CD8-positive, alpha-beta T cell (primary cell): ENCODE measurements at regions of chr1 and their contacts with region 1.

Region 1: DNA sequence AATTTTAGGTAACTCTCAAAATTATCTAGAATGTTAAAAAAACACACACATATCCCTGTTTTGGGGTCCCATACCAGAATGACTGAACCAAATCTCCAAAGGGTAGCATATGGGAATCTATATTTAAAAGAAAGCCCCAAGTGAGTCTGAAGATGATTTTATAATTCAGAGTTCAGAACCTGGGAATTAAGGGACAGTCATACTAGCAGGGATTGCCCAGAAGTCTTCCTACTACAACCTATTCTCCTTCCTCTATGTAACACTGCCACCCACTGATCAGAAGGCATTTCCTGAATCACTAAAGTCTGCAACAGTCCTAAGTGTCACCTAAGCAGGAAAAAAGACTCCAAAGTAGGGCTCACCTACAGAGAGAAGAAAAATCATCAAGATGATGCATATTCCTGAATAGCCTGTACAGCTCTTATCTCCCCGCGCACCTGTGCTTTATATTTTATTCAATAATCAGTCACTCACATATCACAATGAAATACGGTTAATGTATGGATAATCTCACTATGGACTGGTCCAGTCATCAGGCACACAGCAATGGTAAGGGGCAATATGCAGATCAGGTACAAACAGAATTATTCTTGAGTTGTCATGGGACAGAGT is 4.9 kb downstream of the RGS1 start:
- DNase-seq: peak in 3 of 9 experiments; percentile 6 to 73 (median 62)
- ATAC-seq: peak; percentile 29
- H3K4me3 ChIP-seq: no peak overlapping the region
- H3K4me3 Mint-ChIP-seq: no peak overlapping the region
- H3K27ac ChIP-seq: no peak overlapping the region
- H3K27ac Mint-ChIP-seq: peak overlapping the region; percentile 11
- H3K4me1 ChIP-seq: peaks cover 8% of the 10 kb centered on the region
- H3K4me1 Mint-ChIP-seq: peaks cover 18% of the 10 kb centered on the region
- H3K27me3 ChIP-seq: no peaks in the 10 kb centered on the region
- H3K27me3 Mint-ChIP-seq: no peaks in the 10 kb centered on the region
- CTCF ChIP-seq: no peak

Region 2: GRCh38 chr1:192489748-192490147 is 90.7 kb before region 1 on chr1:
- CTCF ChIA-PET with region 1: no interaction called
- POLR2A ChIA-PET with region 1: no interaction called
- intact Hi-C with region 1: loop called in 1 of 2 experiments (anchors 5 kb)
- DNase-seq: peak in 4 of 9 experiments; percentile 20 to 45 (median 30)
- ATAC-seq: peak; percentile 73
- H3K4me3 ChIP-seq: no peak overlapping the region
- H3K4me3 Mint-ChIP-seq: no peak overlapping the region
- H3K27ac ChIP-seq: no peak overlapping the region
- H3K27ac Mint-ChIP-seq: no peak overlapping the region
- H3K4me1 ChIP-seq: no peaks in the 10 kb centered on the region
- H3K4me1 Mint-ChIP-seq: no peaks in the 10 kb centered on the region
- H3K27me3 ChIP-seq: no peaks in the 10 kb centered on the region
- H3K27me3 Mint-ChIP-seq: no peaks in the 10 kb centered on the region
- CTCF ChIP-seq: no peak

Region 3: GRCh38 chr1:192516776-192517297 is 63.6 kb before region 1 on chr1:
- CTCF ChIA-PET with region 1: interaction called, 3 read pairs
- POLR2A ChIA-PET with region 1: no interaction called
- intact Hi-C with region 1: loop called (anchors 1 kb)
- DNase-seq: peak; percentile 18 to 96 (median 55)
- ATAC-seq: peak; percentile 93
- H3K4me3 ChIP-seq: peak overlapping the region; percentile 15
- H3K4me3 Mint-ChIP-seq: peak overlapping the region; percentile 65
- H3K27ac ChIP-seq: peak overlapping the region; percentile 6 to 62
- H3K27ac Mint-ChIP-seq: peak overlapping the region; percentile 92
- H3K4me1 ChIP-seq: peaks cover 25% of the 10 kb centered on the region
- H3K4me1 Mint-ChIP-seq: peaks cover 50% of the 10 kb centered on the region
- H3K27me3 ChIP-seq: no peaks in the 10 kb centered on the region
- H3K27me3 Mint-ChIP-seq: no peaks in the 10 kb centered on the region
- CTCF ChIP-seq: no peak

Region 4: GRCh38 chr1:192559115-192560006 is 21.1 kb before region 1 on chr1:
- CTCF ChIA-PET with region 1: no interaction called
- POLR2A ChIA-PET with region 1: no interaction called
- intact Hi-C with region 1: loop called in 1 of 2 experiments (anchors 2 kb)
- DNase-seq: peak in 1 of 9 experiments; percentile 41
- ATAC-seq: peak; percentile 14
- H3K4me3 ChIP-seq: no peak overlapping the region
- H3K4me3 Mint-ChIP-seq: no peak overlapping the region
- H3K27ac ChIP-seq: no peak overlapping the region
- H3K27ac Mint-ChIP-seq: peak overlapping the region; percentile 5
- H3K4me1 ChIP-seq: no peaks in the 10 kb centered on the region
- H3K4me1 Mint-ChIP-seq: peaks cover 10% of the 10 kb centered on the region
- H3K27me3 ChIP-seq: no peaks in the 10 kb centered on the region
- H3K27me3 Mint-ChIP-seq: no peaks in the 10 kb centered on the region
- CTCF ChIP-seq: no peak

Region 5: GRCh38 chr1:193121616-193122593 is 541.4 kb after region 1 on chr1 and contains the start of gene CDC73:
- CTCF ChIA-PET with region 1: no interaction called
- POLR2A ChIA-PET with region 1: no interaction called
- intact Hi-C with region 1: loop called in 1 of 2 experiments (anchors 5 kb)
- DNase-seq: peak; percentile 98 to 100 (median 99)
- ATAC-seq: peak; percentile 92
- H3K4me3 ChIP-seq: peak within 1 kb of the TSS; percentile 89 to 98
- H3K4me3 Mint-ChIP-seq: peak within 1 kb of the TSS; percentile 100
- H3K27ac ChIP-seq: peak within 1 kb of the TSS; percentile 94 to 96
- H3K27ac Mint-ChIP-seq: peak within 1 kb of the TSS; percentile 100
- H3K4me1 ChIP-seq: peaks cover 33% of the 10 kb centered on the region
- H3K4me1 Mint-ChIP-seq: peaks cover 55% of the 10 kb centered on the region
- H3K27me3 ChIP-seq: no peaks in the 10 kb centered on the region
- H3K27me3 Mint-ChIP-seq: no peaks in the 10 kb centered on the region
- CTCF ChIP-seq: peak; percentile 84
- total RNA-seq, gene CDC73: 73.9 to 78.8 TPM